Activated T-helper 1 cell treated with anti-CD3 and anti-CD28 coated beads, Interleukin-12 subunit alpha, Interleukin-12 subunit beta, Interleukin-2, Interleukin-4 antibody, amounts not matched to agents 30 ng/mL and 10 ng/mL and 1 ng/mL, durations not matched to agents 14 hours and 24 hours and 36 hours (primary cell): ENCODE measurements at regions of chr4 and their contacts with region 1.

Region 1: DNA sequence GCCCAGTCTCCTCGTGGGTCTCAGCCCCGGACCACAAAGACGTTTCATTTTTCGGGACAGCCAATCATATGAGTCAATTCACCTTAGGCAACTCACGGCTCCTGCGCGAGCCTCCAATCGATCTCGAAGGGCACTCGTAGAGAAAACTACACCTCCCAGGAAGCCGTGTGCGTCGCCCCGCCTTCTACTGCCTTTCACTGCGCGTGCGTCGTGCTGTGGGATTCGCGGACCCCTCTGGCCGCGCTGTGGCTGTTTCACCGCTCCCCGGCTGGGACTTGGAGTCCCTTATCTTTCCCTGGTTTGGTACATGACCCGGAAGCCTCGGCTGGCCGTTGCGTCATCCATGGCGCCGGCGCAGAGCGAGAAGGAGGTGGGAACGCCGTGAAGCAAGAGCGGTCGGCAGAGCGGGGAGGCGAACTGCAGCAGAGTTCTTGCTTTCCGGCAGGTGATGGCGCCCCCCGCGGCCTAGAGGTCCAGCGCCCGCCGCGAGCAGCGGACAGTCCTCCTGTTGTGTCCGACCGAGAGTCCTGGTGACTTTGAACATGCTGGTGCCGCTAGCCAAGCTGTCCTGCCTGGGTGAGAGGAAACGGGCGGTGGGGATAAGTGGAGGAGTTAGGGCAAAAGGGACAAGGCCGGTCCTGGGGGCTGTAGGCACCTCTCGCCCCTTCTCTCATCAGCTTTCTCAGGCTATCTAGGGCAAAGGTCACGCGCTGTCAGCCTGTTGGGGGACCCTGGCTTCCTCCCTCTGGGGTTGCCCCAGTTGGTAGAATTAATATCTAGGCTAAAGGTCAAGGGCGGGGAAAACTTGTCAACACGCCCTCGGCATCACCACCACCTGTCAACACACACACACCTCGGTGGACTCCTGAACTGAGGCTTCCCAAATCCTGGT is at the start of gene ETFDH:
- DNase-seq: peak; percentile 98
- H3K4me3 Mint-ChIP-seq: peak within 1 kb of the TSS; percentile 99
- H3K27ac Mint-ChIP-seq: peak within 1 kb of the TSS; percentile 96
- H3K4me1 Mint-ChIP-seq: peaks cover 46% of the 10 kb centered on the region
- H3K27me3 Mint-ChIP-seq: peaks cover 2% of the 10 kb centered on the region
- total RNA-seq, gene ETFDH: 19.9 and 21.5 TPM in 2 replicates

Region 2: DNA sequence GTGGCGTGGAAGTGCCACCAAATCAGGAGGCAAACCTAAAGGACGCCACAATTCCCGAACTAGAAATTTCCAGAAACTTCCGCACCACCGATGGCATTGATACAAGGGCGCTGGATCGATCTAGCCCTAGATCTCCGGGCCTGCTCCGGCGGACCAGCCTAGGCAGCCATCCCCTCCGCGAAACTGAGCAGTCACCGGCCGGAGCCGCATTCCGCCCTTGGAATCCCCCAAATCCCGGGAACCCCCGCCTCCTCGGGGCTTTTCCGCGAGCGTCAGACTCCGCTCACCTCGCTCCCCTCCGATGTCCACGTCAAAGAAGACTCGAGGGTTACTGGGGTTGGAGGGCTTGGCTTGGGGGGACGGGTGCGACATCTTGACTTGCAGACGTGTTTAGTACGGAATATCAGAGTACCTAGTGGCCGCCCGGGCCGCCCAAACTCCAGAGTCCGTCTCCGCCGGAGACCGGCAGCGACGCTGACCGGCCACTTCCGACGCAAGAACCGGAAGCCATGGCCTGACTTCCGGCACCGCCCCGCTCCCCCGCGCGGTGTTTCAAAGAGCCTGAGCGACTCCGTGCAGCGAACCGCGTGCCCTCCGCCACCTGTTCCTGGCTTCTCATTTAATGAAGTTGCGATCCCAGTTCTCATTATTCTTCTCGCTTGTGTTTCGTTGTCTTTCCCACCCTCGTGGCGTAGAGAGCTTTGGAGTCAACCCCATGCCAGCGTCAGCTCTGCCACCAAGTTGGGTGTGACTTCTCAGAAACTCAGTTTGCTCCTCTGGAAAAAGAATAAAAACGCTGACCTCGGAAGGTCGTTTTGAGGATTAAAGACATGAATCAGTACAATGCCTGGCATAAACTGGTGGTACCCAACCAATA is 51.0 kb after region 1 on chr4 and contains the start of gene PPID:
- intact Hi-C with region 1: loop called (anchors 1 kb)
- DNase-seq: peak; percentile 80
- H3K4me3 Mint-ChIP-seq: peak within 1 kb of the TSS; percentile 95
- H3K27ac Mint-ChIP-seq: peak within 1 kb of the TSS; percentile 100
- H3K4me1 Mint-ChIP-seq: peaks cover 59% of the 10 kb centered on the region
- H3K27me3 Mint-ChIP-seq: peaks cover 5% of the 10 kb centered on the region
- total RNA-seq, gene PPID: 52.8 and 55.4 TPM in 2 replicates

Region 3: GRCh38 chr4:158850800-158851644 is 178.9 kb after region 1 on chr4:
- intact Hi-C with region 1: loop called (anchors 2 kb)
- DNase-seq: no peak
- H3K4me3 Mint-ChIP-seq: no peak overlapping the region
- H3K27ac Mint-ChIP-seq: no peak overlapping the region
- H3K4me1 Mint-ChIP-seq: peaks cover 14% of the 10 kb centered on the region
- H3K27me3 Mint-ChIP-seq: no peaks in the 10 kb centered on the region